ENCODE measurements at regions of chr16 and their contacts with region 1.

Region 1: GRCh38 chr16:84062734-84063640 is 20.4 kb upstream of the SLC38A8 start:
- DNase-seq: peak; percentile 80 to 87
- ATAC-seq: peak; percentile 84 to 94 (median 88)
- H3K4me3 ChIP-seq: no peak overlapping the region
- H3K27ac ChIP-seq: no peak overlapping the region
- H3K4me1 ChIP-seq: no peaks in the 10 kb centered on the region
- H3K27me3 ChIP-seq: no peaks in the 10 kb centered on the region
- CTCF ChIP-seq: peak; percentile 83

Region 2: DNA sequence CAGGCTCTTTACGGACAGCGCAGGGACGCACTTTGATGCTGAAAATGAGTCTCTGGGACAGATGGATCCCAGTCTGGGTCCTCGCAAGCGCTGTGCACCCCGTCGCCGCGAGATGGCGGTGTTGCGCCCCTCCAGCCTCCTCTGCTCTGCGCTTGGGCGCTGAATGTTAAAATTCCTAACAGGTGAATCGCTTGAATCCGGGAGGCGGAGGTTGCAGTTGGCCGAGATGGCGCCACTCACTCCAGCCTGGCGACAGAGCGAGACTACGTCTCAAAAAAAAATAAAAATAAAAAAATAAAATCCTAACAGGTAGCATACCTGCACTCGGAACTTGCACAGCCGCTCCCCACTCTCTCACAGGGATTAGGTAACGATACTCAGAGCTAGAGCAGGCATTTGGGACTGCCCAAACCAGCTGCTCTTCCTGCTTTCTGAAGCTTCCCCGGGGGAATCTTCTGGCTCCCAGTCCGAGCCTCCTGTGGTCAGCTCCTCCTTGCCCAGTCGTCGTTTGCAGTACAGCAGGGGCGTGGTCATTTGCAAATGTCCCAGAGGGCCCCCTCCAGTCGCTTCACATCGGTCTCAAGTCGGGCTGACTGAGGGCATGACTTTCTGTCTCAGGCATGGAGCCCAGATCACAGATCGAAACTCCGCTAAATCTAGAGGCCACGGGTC is 136.1 kb before region 1 on chr16:
- intact Hi-C with region 1: loop called in 1 of 2 experiments (anchors 2 kb)
- DNase-seq: peak; percentile 77 to 88
- ATAC-seq: peak; percentile 84 to 89 (median 88)
- H3K4me3 ChIP-seq: peak overlapping the region; percentile 25
- H3K27ac ChIP-seq: no peak overlapping the region
- H3K4me1 ChIP-seq: peaks cover 8% of the 10 kb centered on the region
- H3K27me3 ChIP-seq: no peaks in the 10 kb centered on the region
- CTCF ChIP-seq: peak; percentile 97

Region 3: DNA sequence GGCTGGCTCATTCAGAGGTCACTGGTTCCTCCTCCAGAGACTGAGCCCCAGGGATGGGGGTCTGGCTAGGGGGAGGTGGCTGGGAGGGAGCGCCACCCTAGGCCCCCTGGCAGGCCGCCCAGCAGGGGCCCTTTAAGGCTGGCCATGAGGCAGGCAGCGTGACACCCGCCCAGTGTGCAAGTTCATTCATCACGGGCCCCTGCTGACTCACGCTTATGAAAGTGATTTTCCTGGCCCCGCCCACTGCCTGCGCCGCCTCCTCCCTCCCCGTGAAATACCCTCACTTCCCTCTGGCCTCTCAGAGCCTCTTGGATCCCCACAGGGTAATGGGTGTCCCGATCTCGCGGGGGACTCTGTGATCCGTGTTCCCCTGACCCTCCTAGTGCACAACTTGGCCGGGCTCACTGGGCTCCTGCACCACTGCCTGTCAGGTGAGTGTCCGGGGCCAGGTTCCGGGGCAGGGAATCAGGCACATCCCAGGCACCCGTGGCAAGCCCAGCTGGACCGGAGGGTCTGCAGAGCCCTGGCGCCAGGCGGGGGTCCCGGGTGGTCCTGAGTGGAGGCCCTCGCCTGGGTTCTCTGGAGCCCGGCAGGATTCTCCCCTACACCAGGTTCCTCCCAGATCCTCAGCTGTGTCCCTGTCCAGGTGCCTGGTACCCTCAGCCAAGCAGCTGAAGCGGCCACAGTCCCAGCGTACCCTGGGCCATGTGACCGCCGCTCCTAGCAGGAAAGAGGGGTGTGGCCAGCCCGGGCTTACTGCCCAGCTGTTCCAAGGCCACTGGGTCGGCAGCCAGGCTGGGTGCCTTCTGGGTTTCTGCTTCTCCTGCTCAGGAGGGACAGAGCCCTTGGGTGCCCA is 109.8 kb before region 1 on chr16 and contains the start of gene OSGIN1:
- intact Hi-C with region 1: loop called in 1 of 2 experiments (anchors 5 kb)
- DNase-seq: peak; percentile 95 to 97
- ATAC-seq: peak; percentile 87 to 92 (median 90)
- H3K4me3 ChIP-seq: peak within 1 kb of the TSS; percentile 78
- H3K27ac ChIP-seq: peak within 1 kb of the TSS; percentile 96
- H3K4me1 ChIP-seq: peaks cover 29% of the 10 kb centered on the region
- H3K27me3 ChIP-seq: no peaks in the 10 kb centered on the region
- CTCF ChIP-seq: no peak
- total RNA-seq, gene OSGIN1: 10.4 to 33.7 (median 24.9) TPM

Region 4: DNA sequence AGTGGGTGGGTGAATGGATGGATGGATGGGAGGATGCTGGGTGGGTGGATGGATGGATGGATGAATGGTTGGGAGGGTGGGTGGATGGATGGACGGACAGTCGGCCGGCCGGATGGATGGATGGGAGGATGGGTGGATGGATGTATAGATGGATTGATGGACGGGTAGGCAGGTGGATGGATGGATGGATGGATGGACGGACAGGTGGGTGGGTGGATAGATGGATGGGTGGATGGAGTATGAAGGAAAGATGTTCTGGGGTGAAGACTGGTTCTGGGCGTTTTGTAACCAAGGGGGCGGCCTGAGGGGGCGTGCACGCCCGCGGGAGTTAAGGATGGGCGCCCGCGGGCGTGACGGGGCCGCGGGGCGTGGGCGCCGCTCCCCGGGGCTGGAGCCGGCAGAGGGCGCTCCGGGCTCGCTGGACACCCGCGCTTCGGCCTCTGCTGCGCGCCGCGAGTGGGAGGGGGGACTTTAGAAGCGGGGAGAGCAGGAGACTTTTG is 95.1 kb before region 1 on chr16 and contains the start of gene NECAB2:
- intact Hi-C with region 1: loop called in 1 of 2 experiments (anchors 5 kb)
- DNase-seq: peak; percentile 60 to 73
- ATAC-seq: peak in 3 of 4 donors; percentile 39 to 68 (median 65)
- H3K4me3 ChIP-seq: peak within 1 kb of the TSS; percentile 48
- H3K27ac ChIP-seq: no peak within 1 kb of the TSS
- H3K4me1 ChIP-seq: no peaks in the 10 kb centered on the region
- H3K27me3 ChIP-seq: no peaks in the 10 kb centered on the region
- CTCF ChIP-seq: peak; percentile 64
- total RNA-seq, gene NECAB2: not detected